HepG2 (cell line): ENCODE measurements at regions of chr13 and their contacts with region 1.

Region 1: GRCh38 chr13:75675421-75675820 is 39.3 kb downstream of the LMO7 start:
- DNase-seq: no peak
- ATAC-seq: no peak
- H3K4me3 ChIP-seq: no peak overlapping the region
- H3K27ac ChIP-seq: no peak overlapping the region
- H3K4me1 ChIP-seq: peaks cover 15% of the 10 kb centered on the region
- H3K27me3 ChIP-seq: no peaks in the 10 kb centered on the region
- CTCF ChIP-seq: no peak
- EP300 ChIP-seq: no peak
- POLR2A ChIP-seq: no peak
- RAD21 ChIP-seq: no peak

Region 2: GRCh38 chr13:75600371-75600770 is 75.0 kb before region 1 on chr13:
- CTCF ChIA-PET with region 1: no interaction called
- POLR2A ChIA-PET with region 1: no interaction called
- in situ Hi-C with region 1: no loop called
- intact Hi-C with region 1: loop called (anchors 1 kb)
- DNase-seq: no peak
- ATAC-seq: no peak
- H3K4me3 ChIP-seq: no peak overlapping the region
- H3K27ac ChIP-seq: no peak overlapping the region
- H3K4me1 ChIP-seq: no peaks in the 10 kb centered on the region
- H3K27me3 ChIP-seq: no peaks in the 10 kb centered on the region
- CTCF ChIP-seq: no peak
- EP300 ChIP-seq: no peak
- POLR2A ChIP-seq: no peak
- RAD21 ChIP-seq: no peak

Region 3: DNA sequence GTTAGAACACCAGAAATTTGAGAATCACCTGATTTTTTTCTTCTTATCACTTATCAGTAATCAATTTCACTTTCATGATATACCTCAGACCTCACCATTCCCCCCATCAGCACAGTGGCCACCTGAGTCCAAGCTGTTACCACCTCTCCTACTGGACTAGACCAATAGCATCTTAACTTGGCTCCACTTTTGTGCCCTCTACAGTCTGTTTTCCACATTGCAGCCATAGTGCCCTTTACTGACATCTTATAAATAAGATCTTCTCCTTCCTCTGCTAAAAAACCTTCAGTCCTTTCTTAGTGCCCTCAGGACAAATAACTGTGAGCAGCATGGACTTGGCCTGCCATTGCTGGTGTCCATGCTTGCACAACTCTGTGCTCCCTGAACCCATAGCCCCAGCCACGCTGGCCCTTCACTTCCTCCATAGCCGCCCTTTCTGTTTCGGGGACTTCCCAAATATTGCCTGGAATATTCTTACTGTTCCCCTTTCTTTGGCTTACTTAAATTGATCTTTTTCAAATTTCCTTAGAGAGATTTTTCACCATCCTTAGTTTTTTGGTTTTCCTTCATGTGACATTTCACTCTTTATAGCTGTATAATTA is 341.5 kb after region 1 on chr13:
- CTCF ChIA-PET with region 1: no interaction called
- POLR2A ChIA-PET with region 1: no interaction called
- in situ Hi-C with region 1: loop called (anchors 25 kb)
- intact Hi-C with region 1: loop called (anchors 1 kb)
- DNase-seq: peak; percentile 25
- ATAC-seq: peak; percentile 53
- H3K4me3 ChIP-seq: no peak overlapping the region
- H3K27ac ChIP-seq: no peak overlapping the region
- H3K4me1 ChIP-seq: 0 out of 2 replicates have a peak, but pooled peaks cover 6% of the 10 kb centered on the region
- H3K27me3 ChIP-seq: no peaks in the 10 kb centered on the region
- CTCF ChIP-seq: 0 out of 2 replicates have a peak, but pooled peaks have one; percentile 27
- EP300 ChIP-seq: no peak
- POLR2A ChIP-seq: no peak
- RAD21 ChIP-seq: no peak